ENCODE measurements at regions of chr17 and their contacts with region 1.

Region 1: DNA sequence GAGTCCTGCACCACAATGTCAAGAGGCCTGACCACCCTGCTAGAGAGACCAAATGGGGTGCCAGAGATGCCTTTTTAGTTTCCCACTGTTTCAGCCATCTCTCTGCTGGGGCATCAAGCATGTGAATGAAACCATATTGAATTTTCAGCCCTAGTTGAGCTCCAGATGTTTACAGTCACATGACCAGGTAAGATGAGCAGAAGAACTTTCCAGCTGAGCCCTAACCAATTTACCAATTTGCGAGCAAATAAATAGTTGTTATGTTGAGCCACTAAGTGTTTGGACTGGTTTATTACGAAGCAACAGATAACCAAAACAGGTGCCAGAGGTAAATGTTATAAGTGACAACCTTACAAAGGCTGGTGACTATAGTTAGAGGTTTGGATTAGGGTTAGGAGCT is 209.1 kb upstream of the CCL2 start:
- DNase-seq: no peak
- ATAC-seq: no peak
- H3K4me3 ChIP-seq: no peak overlapping the region
- H3K27ac ChIP-seq: no peak overlapping the region
- H3K4me1 ChIP-seq: no peaks in the 10 kb centered on the region
- H3K27me3 ChIP-seq: peaks cover 0 to 34% (median 9%) of the 10 kb centered on the region in 7 donors
- CTCF ChIP-seq: no peak

Region 2: DNA sequence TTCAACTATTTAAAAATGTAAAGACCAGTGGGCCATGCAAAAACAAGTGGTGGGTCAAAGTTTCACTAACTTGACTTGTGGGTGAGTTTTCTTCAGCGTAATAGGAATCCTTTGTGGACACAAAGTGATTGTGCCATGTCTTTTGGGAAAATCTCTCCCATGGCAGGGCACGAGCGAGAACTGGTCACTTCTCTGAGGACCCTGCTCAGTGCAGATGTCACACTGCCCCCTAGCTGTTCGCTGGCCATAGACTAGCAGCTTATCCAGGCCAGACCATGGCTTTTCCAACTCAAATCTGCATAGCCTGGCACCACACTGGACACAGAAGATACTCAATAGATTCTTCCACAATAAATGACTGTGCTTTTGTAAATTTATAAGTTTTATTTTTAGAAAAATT is 96.9 kb before region 1 on chr17:
- intact Hi-C with region 1: no loop called
- DNase-seq: no peak
- ATAC-seq: no peak
- H3K4me3 ChIP-seq: no peak overlapping the region
- H3K27ac ChIP-seq: no peak overlapping the region
- H3K4me1 ChIP-seq: peaks cover 0 to 4% (median 0%) of the 10 kb centered on the region in 9 donors
- H3K27me3 ChIP-seq: no peaks in the 10 kb centered on the region
- CTCF ChIP-seq: peak in 4 of 9 donors; percentile 8 to 34 (median 20)

Region 3: GRCh38 chr17:34099859-34100515 is 54.0 kb after region 1 on chr17:
- intact Hi-C with region 1: loop called in 1 of 10 experiments (anchors 10 kb)
- DNase-seq: no peak
- ATAC-seq: no peak
- H3K4me3 ChIP-seq: no peak overlapping the region
- H3K27ac ChIP-seq: no peak overlapping the region
- H3K4me1 ChIP-seq: no peaks in the 10 kb centered on the region
- H3K27me3 ChIP-seq: peaks cover 0 to 18% (median 0%) of the 10 kb centered on the region in 7 donors
- CTCF ChIP-seq: no peak